Head of caudate nucleus (tissue), 42 donors: ENCODE measurements at regions of chr7 and their contacts with region 1.

Region 1: DNA sequence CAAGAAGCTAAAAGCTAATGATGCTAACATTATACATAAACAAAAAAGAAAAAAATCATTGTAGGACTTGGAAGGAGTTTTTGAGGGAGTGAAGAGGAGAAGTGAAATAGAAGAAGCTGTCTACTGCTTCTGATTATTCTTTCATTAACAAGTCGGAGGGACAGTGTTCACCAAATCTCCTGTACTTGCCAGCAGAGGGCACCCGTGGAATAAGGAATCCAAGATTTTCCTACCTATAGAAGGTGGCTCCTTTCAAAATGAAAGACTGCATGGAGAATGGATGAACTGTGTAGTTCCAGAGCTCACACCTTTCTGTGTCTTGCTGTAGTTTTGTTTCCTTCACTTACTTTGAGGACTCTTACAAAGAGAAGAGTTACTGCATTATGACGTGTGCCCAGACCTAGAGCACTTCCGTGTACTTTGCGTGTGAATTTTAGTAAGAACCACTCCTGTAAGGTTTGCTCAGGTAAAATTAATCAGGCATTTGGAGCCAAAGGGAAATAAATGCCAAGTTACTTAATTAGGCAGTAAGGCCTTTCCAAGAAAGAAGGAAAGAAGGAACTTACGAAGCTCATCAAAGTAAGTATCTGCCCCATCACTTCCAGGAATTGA is 145.1 kb downstream of the SEMA3D start:
- DNase-seq: peak; percentile 27 to 88 (median 74)

Region 2: GRCh38 chr7:85554236-85555178 is 512.8 kb after region 1 on chr7:
- intact Hi-C with region 1: loop called (anchors 10 kb)
- DNase-seq: peak in 13 of 42 donors; percentile 10 to 68 (median 24)